ENCODE measurements at regions of chr1 and their contacts with region 1.

Region 1: GRCh38 chr1:27662707-27663393 is 9.1 kb downstream of the IFI6 start:
- DNase-seq: peak; percentile 88
- ATAC-seq: peak; percentile 53
- H3K4me3 Mint-ChIP-seq: peak overlapping the region; percentile 72
- H3K27ac Mint-ChIP-seq: peak overlapping the region; percentile 100
- H3K4me1 Mint-ChIP-seq: peaks cover 51% of the 10 kb centered on the region
- H3K27me3 Mint-ChIP-seq: no peaks in the 10 kb centered on the region
- CTCF ChIP-seq: no peak

Region 2: DNA sequence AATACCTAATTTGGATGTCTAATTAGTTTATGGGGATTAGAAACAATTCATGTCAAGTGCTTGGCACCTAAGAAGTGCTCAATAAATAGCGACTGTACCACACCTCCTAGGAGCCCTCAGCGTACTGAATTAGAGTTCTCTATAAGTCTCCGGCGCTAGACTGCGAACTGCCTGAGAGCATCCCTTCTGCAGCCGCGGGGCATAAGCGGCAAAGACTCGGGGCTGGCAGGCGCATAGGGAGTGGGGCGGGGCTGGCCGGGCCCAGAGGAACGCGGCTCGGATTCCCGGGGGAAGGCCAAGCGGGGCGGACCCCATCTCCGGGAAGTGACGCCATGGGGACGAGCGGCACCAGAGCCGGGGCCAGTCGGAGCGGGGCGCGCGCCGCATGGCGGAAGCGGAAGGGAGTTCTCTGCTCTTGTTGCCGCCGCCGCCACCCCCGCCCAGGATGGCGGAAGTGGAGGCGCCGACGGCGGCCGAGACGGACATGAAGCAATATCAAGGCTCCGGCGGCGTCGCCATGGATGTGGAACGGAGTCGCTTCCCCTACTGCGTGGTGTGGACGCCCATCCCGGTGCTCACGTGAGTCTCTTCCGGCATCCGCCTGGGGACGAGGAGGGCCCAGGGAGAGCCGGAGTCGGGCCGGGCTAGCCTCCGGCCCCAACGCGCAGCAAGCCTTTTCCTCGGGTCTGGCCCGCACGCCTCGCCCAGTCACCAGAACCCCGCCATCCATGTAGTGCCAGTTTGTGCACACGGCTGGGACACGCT is 340.9 kb before region 1 on chr1 and contains the start of gene TMEM222:
- CTCF ChIA-PET with region 1: interaction called, 3 read pairs
- POLR2A ChIA-PET with region 1: no interaction called
- intact Hi-C with region 1: loop called (anchors 5 kb)
- DNase-seq: peak; percentile 99
- ATAC-seq: peak; percentile 95
- H3K4me3 Mint-ChIP-seq: peak within 1 kb of the TSS; percentile 97
- H3K27ac Mint-ChIP-seq: peak within 1 kb of the TSS; percentile 93
- H3K4me1 Mint-ChIP-seq: peaks cover 51% of the 10 kb centered on the region
- H3K27me3 Mint-ChIP-seq: no peaks in the 10 kb centered on the region
- CTCF ChIP-seq: no peak
- total RNA-seq, gene TMEM222: 39.3 and 43.0 TPM in 2 replicates

Region 3: GRCh38 chr1:27489910-27490741 is 172.7 kb before region 1 on chr1 and contains the start of gene WASF2:
- CTCF ChIA-PET with region 1: no interaction called
- POLR2A ChIA-PET with region 1: interaction called, 7 read pairs
- intact Hi-C with region 1: loop called (anchors 2 kb)
- DNase-seq: peak; percentile 94
- ATAC-seq: peak; percentile 88
- H3K4me3 Mint-ChIP-seq: peak within 1 kb of the TSS; percentile 95
- H3K27ac Mint-ChIP-seq: peak within 1 kb of the TSS; percentile 100
- H3K4me1 Mint-ChIP-seq: peaks cover 59% of the 10 kb centered on the region
- H3K27me3 Mint-ChIP-seq: no peaks in the 10 kb centered on the region
- CTCF ChIP-seq: no peak
- total RNA-seq, gene WASF2: 136 and 137 TPM in 2 replicates

Region 4: DNA sequence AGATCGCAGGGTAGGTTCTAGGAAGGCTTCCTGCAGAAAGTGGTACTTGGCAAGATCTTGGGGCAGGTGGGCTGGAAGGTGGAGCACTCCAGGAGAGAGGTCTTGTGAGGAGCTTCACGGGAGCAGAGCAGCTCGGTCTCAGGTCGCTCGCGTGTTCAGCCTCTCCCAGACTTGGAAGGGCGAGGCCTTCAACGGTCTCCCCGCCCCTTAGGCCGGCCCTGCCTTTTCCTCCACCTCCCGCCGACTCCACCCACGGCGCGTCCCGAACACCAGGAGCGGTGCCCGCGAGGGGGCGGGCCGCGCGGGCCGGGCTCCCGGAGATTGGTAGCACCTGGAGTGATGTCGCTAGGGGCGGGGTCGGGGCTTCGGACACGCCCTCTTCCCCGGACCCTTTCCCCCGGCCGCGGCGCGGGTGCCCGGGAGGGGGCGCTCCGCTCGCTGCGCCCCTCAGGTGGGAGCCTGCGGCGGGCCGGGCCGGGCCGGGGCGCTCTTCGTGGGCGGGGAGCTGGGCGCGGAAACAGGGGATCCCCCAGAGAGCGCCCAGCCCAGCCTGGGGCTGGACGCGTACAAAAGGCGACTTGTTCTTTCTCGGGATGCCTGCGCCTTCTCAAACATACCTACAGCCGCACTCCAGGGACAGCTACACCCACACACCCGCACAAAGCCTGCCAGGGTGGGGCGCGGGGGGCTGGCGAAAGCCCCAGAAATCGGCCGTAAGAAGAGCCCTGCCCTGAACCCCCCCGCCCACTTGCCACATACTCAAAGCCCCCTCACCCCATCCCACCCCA is 94.4 kb before region 1 on chr1:
- CTCF ChIA-PET with region 1: interaction called, 5 read pairs
- POLR2A ChIA-PET with region 1: no interaction called
- intact Hi-C with region 1: loop called (anchors 1 kb)
- DNase-seq: peak; percentile 94
- ATAC-seq: peak; percentile 91
- H3K4me3 Mint-ChIP-seq: peak overlapping the region; percentile 73
- H3K27ac Mint-ChIP-seq: no peak overlapping the region
- H3K4me1 Mint-ChIP-seq: peaks cover 33% of the 10 kb centered on the region
- H3K27me3 Mint-ChIP-seq: no peaks in the 10 kb centered on the region
- CTCF ChIP-seq: no peak

Region 5: DNA sequence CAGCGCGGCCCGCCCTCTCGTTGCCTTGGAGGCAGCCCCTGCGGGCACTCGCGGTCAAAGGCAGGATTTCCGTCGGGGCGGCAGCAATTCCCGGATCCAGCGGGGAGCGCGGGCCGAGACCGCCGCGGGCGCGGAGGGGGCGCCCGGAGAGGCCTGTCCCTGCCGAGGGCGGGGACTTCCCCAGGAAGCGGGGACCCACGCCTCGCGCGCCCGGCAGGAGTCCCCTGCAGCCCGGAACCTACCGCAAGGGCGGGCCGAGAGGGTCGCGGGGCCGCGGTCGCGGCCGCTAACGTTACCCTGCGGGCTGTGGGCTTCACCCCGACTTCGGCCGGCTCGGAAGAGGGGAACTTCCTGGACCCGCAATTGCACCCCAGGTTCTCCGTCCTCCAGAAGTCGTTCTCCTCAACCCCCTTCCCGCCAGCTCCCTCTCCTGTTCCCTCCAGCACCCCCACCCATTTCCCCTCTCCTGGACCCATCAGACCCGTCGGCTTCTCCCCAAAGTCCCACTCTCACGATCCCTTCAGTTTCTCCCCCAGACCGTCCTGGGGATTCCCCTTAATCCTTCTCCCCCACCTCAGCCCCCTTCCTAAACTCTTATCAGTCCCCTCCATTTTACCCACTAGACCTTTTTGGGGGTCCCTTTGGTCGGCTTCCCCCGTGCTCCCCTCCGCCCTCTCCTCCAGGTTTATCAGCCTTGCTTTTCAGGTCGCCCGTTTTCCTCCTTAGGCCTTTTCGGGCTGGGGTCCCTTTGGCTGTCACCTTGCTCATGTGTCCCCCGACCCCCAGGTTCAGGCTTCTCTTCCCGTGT is 28.5 kb before region 1 on chr1:
- CTCF ChIA-PET with region 1: interaction called, 14 read pairs
- POLR2A ChIA-PET with region 1: interaction called, 271 read pairs
- intact Hi-C with region 1: loop called (anchors 1 kb)
- DNase-seq: peak; percentile 64
- ATAC-seq: peak; percentile 16
- H3K4me3 Mint-ChIP-seq: peak overlapping the region; percentile 83
- H3K27ac Mint-ChIP-seq: peak overlapping the region; percentile 87
- H3K4me1 Mint-ChIP-seq: peaks cover 89% of the 10 kb centered on the region
- H3K27me3 Mint-ChIP-seq: no peaks in the 10 kb centered on the region
- CTCF ChIP-seq: no peak

Region 6: DNA sequence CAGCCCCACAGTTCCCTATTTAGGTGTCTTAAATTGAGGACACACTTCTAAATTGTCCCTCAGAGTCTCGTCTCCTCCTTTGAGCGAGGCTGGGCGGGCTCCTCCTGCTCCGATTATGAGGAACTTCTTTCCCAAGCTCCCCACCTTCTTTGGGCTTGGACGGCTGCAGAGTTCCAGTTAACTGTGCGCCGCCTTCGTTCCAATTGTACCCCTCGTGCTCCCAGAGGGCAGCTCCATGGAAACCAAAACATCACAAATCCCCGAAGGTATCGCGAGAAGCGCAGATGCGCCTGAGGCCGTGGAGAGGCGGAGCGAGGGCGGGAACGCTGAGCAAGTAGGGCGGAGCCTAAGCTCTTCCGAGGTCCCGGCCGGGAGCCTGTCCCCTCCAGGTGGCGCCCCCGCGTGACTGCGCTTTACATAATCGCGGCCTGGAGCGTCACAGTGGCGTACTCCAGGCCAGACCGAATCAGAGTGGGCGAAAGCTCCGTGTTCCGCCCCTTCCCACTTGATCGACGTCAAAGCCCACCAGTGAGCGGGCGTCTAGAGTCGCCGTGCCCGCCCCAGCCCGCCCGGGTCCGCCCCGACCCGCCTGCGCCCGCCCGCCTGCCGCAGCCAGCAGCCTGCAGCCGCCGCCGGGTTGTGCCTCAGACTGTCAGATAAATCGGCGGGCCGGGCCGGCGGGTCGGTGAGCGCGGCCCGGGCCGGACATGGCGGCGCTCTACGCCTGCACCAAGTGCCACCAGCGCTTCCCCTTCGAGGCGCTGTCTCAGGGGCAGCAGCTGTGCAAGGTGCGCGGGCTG is 62.7 kb after region 1 on chr1 and contains the start of gene FAM76A:
- CTCF ChIA-PET with region 1: no interaction called
- POLR2A ChIA-PET with region 1: interaction called, 10 read pairs
- intact Hi-C with region 1: no loop called
- DNase-seq: peak; percentile 98
- ATAC-seq: peak; percentile 93
- H3K4me3 Mint-ChIP-seq: peak within 1 kb of the TSS; percentile 88
- H3K27ac Mint-ChIP-seq: peak within 1 kb of the TSS; percentile 97
- H3K4me1 Mint-ChIP-seq: peaks cover 26% of the 10 kb centered on the region
- H3K27me3 Mint-ChIP-seq: no peaks in the 10 kb centered on the region
- CTCF ChIP-seq: no peak
- total RNA-seq, gene FAM76A: 14.9 and 19.3 TPM in 2 replicates